ENCODE measurements at regions of chr19 and their contacts with region 1.

Region 1: GRCh38 chr19:17932485-17933338 is at the start of gene CCDC124:
- DNase-seq: peak; percentile 94
- H3K4me3 Mint-ChIP-seq: peak within 1 kb of the TSS; percentile 93
- H3K27ac Mint-ChIP-seq: peak within 1 kb of the TSS; percentile 97
- H3K4me1 Mint-ChIP-seq: peaks cover 33% of the 10 kb centered on the region
- H3K27me3 Mint-ChIP-seq: no peaks in the 10 kb centered on the region
- total RNA-seq, gene CCDC124: 59.2 to 64.7 TPM

Region 2: DNA sequence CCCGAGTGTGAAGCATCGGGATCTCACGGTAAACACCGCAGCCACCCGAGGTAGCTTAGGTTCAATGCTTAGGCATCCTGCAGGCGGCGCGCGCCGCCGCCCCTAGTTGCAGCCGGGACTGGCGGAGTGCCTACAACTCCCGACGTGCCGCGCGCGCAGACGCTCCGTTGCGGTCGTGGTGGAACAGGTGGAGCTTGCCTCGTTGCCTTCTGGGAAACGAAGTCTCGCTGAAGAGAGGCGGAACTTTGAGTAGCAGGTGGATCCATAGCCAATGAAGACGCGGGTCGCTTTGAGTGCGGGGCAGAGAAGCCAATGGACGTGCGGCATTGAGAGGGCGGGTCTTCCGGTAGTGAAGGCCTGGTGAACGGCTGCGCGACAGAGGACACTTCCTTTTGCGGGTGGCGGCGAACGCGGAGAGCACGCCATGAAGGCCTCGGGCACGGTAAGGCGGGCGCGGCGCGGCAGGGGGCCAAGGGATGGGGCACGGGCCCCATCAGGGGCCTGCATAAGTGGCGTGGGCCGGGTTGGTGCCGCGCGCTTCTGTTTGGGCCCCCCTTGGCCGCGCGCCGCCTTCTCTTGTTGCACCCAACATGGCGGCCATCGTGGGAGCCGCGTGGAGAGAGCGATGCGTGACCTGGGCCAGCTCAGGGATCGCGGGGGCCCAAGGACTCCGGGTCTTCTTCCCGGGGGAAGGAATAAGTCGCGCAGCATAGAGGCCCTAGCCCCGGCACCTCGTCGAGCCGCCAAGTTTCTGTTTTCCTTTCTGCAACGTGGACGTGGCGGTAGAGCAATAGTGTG is 73.0 kb before region 1 on chr19 and contains the start of gene RPL18A:
- CTCF ChIA-PET with region 1: interaction called, 326 read pairs
- POLR2A ChIA-PET with region 1: interaction called, 38 read pairs
- DNase-seq: peak; percentile 100
- H3K4me3 Mint-ChIP-seq: peak within 1 kb of the TSS; percentile 90
- H3K27ac Mint-ChIP-seq: peak within 1 kb of the TSS; percentile 94
- H3K4me1 Mint-ChIP-seq: peaks cover 26% of the 10 kb centered on the region
- H3K27me3 Mint-ChIP-seq: no peaks in the 10 kb centered on the region
- total RNA-seq, gene RPL18A: 2,216 to 2,434 TPM

Region 3: GRCh38 chr19:17873786-17874757 is 58.6 kb before region 1 on chr19:
- CTCF ChIA-PET with region 1: interaction called, 44 read pairs
- POLR2A ChIA-PET with region 1: interaction called, 7 read pairs
- DNase-seq: peak; percentile 70
- H3K4me3 Mint-ChIP-seq: peak overlapping the region; percentile 83
- H3K27ac Mint-ChIP-seq: peak overlapping the region; percentile 80
- H3K4me1 Mint-ChIP-seq: peaks cover 29% of the 10 kb centered on the region
- H3K27me3 Mint-ChIP-seq: peaks cover 3% of the 10 kb centered on the region

Region 4: DNA sequence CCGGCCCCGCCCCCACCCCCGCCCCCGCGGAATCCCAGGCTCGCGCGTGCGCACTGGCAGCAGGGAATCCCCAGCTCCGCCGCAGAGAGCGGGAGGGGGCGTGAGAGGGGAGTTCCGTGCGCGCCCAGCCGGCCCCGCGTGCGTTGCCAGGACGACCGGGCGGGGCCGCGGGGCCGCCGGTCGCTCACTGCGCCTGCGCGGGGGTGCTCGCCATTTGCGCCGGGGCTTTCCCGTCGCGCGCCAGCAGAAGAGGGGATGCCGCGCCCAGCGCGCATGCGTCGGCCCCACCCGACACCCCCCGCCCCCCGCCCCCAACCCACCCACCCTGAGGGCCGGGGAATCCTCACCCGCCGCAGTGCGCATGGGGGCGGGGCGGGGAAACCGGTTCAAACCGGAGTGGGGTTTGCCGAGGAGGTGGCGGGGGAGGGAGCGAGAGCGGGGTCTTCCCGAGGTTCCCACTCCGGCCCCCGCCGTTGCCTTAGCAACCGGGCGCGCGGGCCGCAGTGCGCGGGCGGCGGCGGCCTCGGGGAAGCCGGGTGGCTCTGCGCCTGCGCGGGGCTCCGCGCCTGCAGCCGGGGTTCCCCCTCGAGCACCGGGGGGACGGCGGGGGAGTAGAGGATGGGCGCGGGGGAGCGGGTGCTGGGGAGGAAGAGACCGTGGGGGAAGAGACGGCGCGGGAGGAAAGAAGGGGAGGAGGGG is 15.3 kb after region 1 on chr19:
- CTCF ChIA-PET with region 1: interaction called, 44 read pairs
- POLR2A ChIA-PET with region 1: no interaction called
- DNase-seq: peak; percentile 92
- H3K4me3 Mint-ChIP-seq: peak overlapping the region; percentile 76
- H3K27ac Mint-ChIP-seq: peak overlapping the region; percentile 54
- H3K4me1 Mint-ChIP-seq: peaks cover 47% of the 10 kb centered on the region
- H3K27me3 Mint-ChIP-seq: peaks cover 37% of the 10 kb centered on the region

Region 5: DNA sequence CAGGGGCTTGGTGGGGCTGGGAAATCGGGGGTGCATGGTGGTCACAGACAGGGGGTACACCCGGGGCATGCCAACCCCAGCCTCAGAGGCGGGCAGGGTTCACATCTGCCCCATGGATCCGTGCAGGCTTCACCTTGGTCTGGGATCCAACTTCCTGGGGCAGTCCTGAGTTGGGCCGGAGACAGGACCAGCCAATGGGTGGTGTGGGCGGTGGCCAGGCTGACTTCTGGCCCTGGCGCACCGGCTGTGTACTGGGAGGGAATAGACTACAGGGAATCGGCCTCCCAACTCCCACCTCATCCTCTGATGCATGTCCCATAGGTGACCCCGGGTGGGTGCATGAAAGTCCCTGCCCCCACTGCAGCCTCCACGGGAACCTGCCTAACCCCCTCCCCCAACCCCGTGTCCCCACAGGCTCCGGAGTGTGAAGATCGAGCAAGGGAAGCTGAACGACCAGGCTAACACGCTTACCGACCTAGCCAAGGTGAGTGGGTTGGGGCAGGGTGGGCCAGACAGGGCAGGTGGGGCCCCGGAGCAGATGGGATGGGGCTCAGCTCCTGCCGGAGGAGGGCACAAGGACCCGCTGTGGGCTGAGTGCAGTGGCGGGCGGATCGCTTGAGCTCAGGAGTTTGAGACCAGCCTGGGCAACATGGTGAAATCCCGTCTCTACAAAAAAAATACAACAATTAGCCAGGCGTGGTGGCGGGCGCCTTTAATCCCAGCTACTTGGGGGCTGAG is 60.5 kb after region 1 on chr19:
- CTCF ChIA-PET with region 1: interaction called, 45 read pairs
- POLR2A ChIA-PET with region 1: interaction called, 5 read pairs
- DNase-seq: no peak
- H3K4me3 Mint-ChIP-seq: no peak overlapping the region
- H3K27ac Mint-ChIP-seq: no peak overlapping the region
- H3K4me1 Mint-ChIP-seq: peaks cover 5% of the 10 kb centered on the region
- H3K27me3 Mint-ChIP-seq: peaks cover 2% of the 10 kb centered on the region

Region 6: DNA sequence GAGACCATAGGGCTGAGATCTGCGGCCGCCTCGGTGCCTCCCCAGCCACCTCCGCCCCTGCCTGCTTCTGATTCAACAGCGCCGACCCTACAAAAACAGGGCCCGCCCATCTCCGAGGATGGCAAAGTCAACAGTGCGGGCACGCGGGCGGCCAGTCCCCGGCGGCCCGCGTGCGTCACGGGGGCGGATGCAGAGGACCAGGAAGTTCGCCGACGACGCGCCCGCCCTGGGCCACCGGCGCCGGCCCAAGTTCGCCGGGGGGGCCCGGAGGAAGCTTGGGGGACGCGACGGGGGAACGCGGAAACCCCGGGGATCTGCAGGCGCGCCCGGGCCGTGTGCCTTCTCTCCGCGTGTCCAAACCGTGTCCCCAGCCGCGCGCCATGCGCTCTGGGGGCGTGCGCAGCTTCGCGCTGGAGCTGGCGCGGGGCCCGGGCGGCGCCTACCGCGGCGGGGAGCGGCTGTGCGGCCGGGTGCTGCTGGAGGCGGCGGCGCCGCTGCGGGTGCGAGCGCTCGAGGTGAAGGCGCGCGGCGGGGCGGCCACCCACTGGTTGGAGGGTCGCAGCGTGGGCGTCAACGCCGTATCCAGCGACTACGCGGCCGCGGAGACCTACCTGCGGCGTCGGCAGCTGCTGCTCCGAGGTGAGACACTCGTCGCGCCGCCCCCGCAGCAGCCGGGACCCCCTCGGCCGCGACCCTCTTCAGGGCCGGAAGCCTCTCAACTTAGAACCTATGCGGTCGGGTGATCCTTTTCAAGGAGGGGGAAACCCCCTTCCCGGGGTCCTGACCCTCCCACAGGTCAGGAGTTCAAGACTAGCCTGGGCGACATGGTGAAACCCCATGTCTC is 68.4 kb after region 1 on chr19:
- CTCF ChIA-PET with region 1: interaction called, 45 read pairs
- POLR2A ChIA-PET with region 1: interaction called, 5 read pairs
- DNase-seq: peak; percentile 92
- H3K4me3 Mint-ChIP-seq: peak overlapping the region; percentile 90
- H3K27ac Mint-ChIP-seq: peak overlapping the region; percentile 100
- H3K4me1 Mint-ChIP-seq: peaks cover 38% of the 10 kb centered on the region
- H3K27me3 Mint-ChIP-seq: peaks cover 2% of the 10 kb centered on the region

Measured in activated CD4-positive, alpha-beta T cell treated with anti-CD3 and anti-CD28 coated beads, Interleukin-2, amount 10 ng/mL, durations not matched to agents 7 days and 5 days (primary cell).